ENCODE measurements at regions of chr22 and their contacts with region 1.

Region 1: GRCh38 chr22:18001040-18001893 is 23.1 kb downstream of the MICAL3 start:
- DNase-seq: peak; percentile 81
- ATAC-seq: peak; percentile 96
- H3K4me3 ChIP-seq: peak overlapping the region; percentile 64 to 69
- H3K27ac ChIP-seq: peak overlapping the region; percentile 86
- H3K4me1 ChIP-seq: peaks cover 8% of the 10 kb centered on the region
- H3K27me3 ChIP-seq: no peaks in the 10 kb centered on the region
- CTCF ChIP-seq: peak; percentile 77

Region 2: GRCh38 chr22:17867160-17867785 is 134.0 kb before region 1 on chr22:
- CTCF ChIA-PET with region 1: no interaction called
- POLR2A ChIA-PET with region 1: no interaction called
- in situ Hi-C with region 1: no loop called
- intact Hi-C with region 1: no loop called
- DNase-seq: no peak
- ATAC-seq: no peak
- H3K4me3 ChIP-seq: no peak overlapping the region
- H3K27ac ChIP-seq: no peak overlapping the region
- H3K4me1 ChIP-seq: no peaks in the 10 kb centered on the region
- H3K27me3 ChIP-seq: no peaks in the 10 kb centered on the region
- CTCF ChIP-seq: no peak

Region 3: GRCh38 chr22:18119409-18120110 is 118.3 kb after region 1 on chr22:
- CTCF ChIA-PET with region 1: no interaction called
- POLR2A ChIA-PET with region 1: no interaction called
- in situ Hi-C with region 1: no loop called
- intact Hi-C with region 1: no loop called
- DNase-seq: no peak
- ATAC-seq: no peak
- H3K4me3 ChIP-seq: no peak overlapping the region
- H3K27ac ChIP-seq: no peak overlapping the region
- H3K4me1 ChIP-seq: no peaks in the 10 kb centered on the region
- H3K27me3 ChIP-seq: no peaks in the 10 kb centered on the region
- CTCF ChIP-seq: no peak

Region 4: DNA sequence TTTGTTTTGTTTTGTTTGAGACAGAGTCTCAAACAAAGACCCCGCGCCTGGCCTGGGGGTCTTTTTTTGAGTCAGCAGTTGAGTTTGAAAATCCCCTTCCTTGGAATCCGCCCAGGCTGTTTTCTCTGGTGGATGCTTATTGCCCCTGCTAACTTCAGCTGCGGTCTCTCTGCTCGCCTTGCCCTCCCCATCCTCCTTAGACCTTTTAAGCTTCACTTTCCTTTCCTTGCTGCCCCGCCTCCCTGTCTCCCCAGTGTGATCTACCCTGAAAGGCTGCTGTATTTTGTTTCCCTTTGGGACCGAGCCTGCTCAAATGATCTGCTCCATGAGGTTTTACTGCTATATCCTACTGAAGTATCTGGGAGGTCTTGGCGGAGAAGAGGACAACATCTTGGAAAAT is 151.3 kb after region 1 on chr22:
- CTCF ChIA-PET with region 1: interaction called, 3 read pairs
- POLR2A ChIA-PET with region 1: interaction called, 10 read pairs
- in situ Hi-C with region 1: no loop called
- intact Hi-C with region 1: no loop called
- DNase-seq: no peak
- ATAC-seq: no peak
- H3K4me3 ChIP-seq: no peak overlapping the region
- H3K27ac ChIP-seq: no peak overlapping the region
- H3K4me1 ChIP-seq: no peaks in the 10 kb centered on the region; the same call in 1 of the 2 replicates
- H3K27me3 ChIP-seq: no peaks in the 10 kb centered on the region
- CTCF ChIP-seq: no peak